ENCODE measurements at regions of chr12 and their contacts with region 1.

Region 1: GRCh38 chr12:12786716-12787601 is 1.5 kb downstream of the APOLD1 start:
- DNase-seq: peak; percentile 80
- H3K4me3 Mint-ChIP-seq: peak overlapping the region; percentile 83
- H3K27ac Mint-ChIP-seq: peak overlapping the region; percentile 80
- H3K4me1 Mint-ChIP-seq: peaks cover 36% of the 10 kb centered on the region
- H3K27me3 Mint-ChIP-seq: no peaks in the 10 kb centered on the region

Region 2: GRCh38 chr12:12736759-12737676 is 49.9 kb before region 1 on chr12:
- CTCF ChIA-PET with region 1: interaction called, 30 read pairs
- POLR2A ChIA-PET with region 1: interaction called, 5 read pairs
- intact Hi-C with region 1: no loop called
- DNase-seq: peak; percentile 76
- H3K4me3 Mint-ChIP-seq: peak overlapping the region; percentile 59
- H3K27ac Mint-ChIP-seq: peak overlapping the region; percentile 88
- H3K4me1 Mint-ChIP-seq: peaks cover 46% of the 10 kb centered on the region
- H3K27me3 Mint-ChIP-seq: no peaks in the 10 kb centered on the region

Region 3: GRCh38 chr12:12813120-12814101 is 26.5 kb after region 1 on chr12 and contains the start of gene DDX47:
- CTCF ChIA-PET with region 1: interaction called, 72 read pairs
- POLR2A ChIA-PET with region 1: interaction called, 6 read pairs
- intact Hi-C with region 1: loop called (anchors 1 kb)
- DNase-seq: peak; percentile 98
- H3K4me3 Mint-ChIP-seq: peak within 1 kb of the TSS; percentile 93
- H3K27ac Mint-ChIP-seq: peak within 1 kb of the TSS; percentile 95
- H3K4me1 Mint-ChIP-seq: peaks cover 59% of the 10 kb centered on the region
- H3K27me3 Mint-ChIP-seq: no peaks in the 10 kb centered on the region
- total RNA-seq, gene DDX47: 75.2 to 75.3 TPM

Region 4: DNA sequence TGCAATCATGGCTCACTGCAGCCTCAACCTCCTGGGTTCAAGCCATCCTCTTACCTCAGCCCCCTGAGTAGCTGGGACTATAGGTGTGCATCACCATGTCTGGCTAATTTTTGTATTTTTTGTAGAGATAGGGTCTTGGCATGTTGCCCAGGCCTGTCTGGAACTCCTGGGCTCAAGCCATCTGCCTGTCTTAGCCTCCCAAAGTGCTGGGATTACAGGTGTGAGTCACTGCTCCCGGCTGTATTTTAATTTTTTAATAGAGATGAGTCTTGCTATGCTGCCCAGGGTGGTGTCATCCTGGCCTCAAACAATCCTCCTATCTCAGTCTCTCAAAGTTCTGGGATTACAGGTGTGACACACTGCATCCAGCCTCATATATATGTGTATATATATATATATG is 72.7 kb after region 1 on chr12:
- CTCF ChIA-PET with region 1: no interaction called
- POLR2A ChIA-PET with region 1: no interaction called
- intact Hi-C with region 1: no loop called
- DNase-seq: no peak
- H3K4me3 Mint-ChIP-seq: no peak overlapping the region
- H3K27ac Mint-ChIP-seq: no peak overlapping the region
- H3K4me1 Mint-ChIP-seq: no peaks in the 10 kb centered on the region
- H3K27me3 Mint-ChIP-seq: no peaks in the 10 kb centered on the region

Region 5: DNA sequence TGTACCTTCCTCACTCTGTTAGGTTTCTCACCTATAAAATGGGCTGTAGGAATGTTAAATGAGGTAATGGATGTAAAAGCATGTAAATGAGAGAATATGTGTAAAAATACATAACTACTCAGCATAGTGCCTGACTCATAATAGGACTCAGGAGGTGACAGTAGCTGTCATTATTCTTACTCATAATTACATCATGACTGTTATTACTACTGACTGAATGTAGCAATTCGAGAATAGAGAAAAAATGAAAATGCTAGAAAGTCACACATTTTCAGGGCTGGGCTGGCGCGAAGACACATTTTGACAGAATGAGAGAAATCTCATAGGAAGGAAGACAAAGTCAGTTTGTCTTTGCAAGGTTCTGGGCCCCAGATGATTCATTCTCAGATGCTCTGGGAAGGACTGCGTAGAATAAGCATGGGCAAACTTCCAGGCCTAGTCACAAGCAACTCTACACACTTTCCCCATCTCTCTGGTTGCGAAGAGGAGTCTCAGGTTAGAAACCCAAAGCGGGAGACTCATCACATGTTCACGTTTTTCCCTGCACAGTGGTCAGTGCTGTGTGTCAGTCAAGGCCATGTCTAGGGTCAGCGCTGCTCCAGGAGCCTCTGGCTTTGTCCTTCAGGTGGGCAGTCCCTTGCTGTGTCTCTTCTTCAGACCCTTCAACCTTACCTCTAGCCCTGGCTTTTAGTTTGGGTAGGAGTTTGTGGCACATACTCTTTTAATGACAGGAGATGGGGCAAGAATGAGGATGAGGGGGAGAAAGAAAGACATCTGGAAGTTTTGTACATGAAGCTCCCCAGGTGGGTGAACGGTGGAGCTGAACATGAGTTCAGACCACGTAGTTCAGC is 112.8 kb after region 1 on chr12:
- CTCF ChIA-PET with region 1: no interaction called
- POLR2A ChIA-PET with region 1: no interaction called
- intact Hi-C with region 1: loop called (anchors 2 kb)
- DNase-seq: peak; percentile 86
- H3K4me3 Mint-ChIP-seq: no peak overlapping the region
- H3K27ac Mint-ChIP-seq: peak overlapping the region; percentile 77
- H3K4me1 Mint-ChIP-seq: peaks cover 19% of the 10 kb centered on the region
- H3K27me3 Mint-ChIP-seq: peaks cover 16% of the 10 kb centered on the region

Region 6: GRCh38 chr12:12983420-12984035 is 196.6 kb after region 1 on chr12:
- CTCF ChIA-PET with region 1: interaction called, 10 read pairs
- POLR2A ChIA-PET with region 1: no interaction called
- intact Hi-C with region 1: loop called (anchors 1 kb)
- DNase-seq: no peak
- H3K4me3 Mint-ChIP-seq: no peak overlapping the region
- H3K27ac Mint-ChIP-seq: no peak overlapping the region
- H3K4me1 Mint-ChIP-seq: peaks cover 2% of the 10 kb centered on the region
- H3K27me3 Mint-ChIP-seq: no peaks in the 10 kb centered on the region

Region 7: DNA sequence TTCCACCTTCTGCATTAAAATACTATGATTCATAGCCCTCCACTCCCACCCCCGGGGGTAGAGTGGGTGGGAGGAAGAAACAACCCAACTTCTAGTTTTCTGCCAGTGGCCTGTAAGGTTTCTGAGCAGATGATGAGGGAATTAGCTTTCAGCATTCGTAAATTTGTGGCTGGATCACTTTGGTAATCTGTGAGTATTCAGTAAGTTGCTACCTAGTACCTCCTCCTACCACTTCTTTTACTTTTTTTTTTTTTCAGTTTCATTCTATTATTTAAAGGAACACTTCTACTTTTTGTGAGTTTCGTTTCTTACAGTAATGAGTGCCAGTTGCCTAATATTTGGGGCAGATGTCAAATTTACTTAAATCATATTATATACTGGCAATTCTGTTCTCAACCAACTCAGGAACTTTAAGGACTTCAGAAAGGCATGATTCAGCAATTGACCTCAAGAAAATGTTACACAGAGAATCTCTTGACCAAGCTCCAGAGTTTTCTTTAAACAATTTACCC is 367.1 kb after region 1 on chr12:
- CTCF ChIA-PET with region 1: no interaction called
- POLR2A ChIA-PET with region 1: no interaction called
- intact Hi-C with region 1: no loop called
- DNase-seq: no peak
- H3K4me3 Mint-ChIP-seq: no peak overlapping the region
- H3K27ac Mint-ChIP-seq: no peak overlapping the region
- H3K4me1 Mint-ChIP-seq: peaks cover 6% of the 10 kb centered on the region
- H3K27me3 Mint-ChIP-seq: peaks cover 9% of the 10 kb centered on the region